Vagina (tissue), 2 donors: ENCODE measurements at regions of chr11 and their contacts with region 1.

Region 1: DNA sequence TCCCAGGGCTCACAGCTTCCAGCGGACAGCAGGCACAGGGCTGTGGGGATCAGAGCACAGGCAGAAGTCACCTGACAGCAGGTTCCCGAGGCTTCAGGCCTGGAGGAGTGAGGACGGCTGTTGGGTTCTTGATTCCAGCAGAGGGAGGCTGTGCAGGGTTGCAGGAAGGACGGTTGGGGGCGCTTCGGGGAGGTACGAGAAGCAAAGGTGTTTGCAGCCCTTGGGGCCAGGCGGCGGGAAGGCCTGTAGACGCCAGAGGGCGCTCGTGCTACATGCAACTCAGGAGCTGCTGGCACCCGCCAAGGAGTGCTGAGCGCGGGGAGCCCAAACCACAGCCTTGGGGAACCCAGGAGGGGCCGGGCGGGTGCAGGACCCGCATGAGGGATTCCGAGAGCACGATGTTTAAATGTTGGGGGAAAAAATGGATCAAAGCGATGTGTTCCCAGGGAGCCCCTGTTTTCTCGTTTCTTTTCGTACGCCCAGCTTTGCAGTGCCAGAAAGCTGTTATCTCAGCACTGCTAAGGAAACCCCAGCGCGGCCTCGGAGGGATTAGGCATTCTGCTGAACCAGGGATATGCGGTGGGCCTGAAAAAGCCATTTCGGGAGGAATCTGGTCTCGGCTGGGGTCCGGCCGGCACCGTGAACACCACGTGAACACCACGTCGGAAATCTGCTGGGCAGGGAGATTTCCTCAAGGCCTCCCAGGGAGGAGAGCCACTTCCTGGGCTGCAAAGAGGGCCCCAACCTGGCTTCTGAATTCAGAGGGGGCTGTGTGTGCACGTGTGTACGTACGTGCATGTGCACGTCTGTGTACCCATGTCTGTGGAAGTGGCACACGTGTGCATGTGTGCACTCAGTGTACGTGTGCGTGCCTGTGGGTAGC is 88.1 kb downstream of the KCNQ1 start:
- DNase-seq: no peak
- H3K4me3 ChIP-seq: peak overlapping the region in 1 of 2 donors; percentile 23
- H3K27ac ChIP-seq: peak overlapping the region; percentile 65
- H3K4me1 ChIP-seq: peaks cover 16% of the 10 kb centered on the region
- H3K27me3 ChIP-seq: no peaks in the 10 kb centered on the region
- CTCF ChIP-seq: peak; percentile 99 to 100 (median 100)
- POLR2A ChIP-seq: no peak

Region 2: DNA sequence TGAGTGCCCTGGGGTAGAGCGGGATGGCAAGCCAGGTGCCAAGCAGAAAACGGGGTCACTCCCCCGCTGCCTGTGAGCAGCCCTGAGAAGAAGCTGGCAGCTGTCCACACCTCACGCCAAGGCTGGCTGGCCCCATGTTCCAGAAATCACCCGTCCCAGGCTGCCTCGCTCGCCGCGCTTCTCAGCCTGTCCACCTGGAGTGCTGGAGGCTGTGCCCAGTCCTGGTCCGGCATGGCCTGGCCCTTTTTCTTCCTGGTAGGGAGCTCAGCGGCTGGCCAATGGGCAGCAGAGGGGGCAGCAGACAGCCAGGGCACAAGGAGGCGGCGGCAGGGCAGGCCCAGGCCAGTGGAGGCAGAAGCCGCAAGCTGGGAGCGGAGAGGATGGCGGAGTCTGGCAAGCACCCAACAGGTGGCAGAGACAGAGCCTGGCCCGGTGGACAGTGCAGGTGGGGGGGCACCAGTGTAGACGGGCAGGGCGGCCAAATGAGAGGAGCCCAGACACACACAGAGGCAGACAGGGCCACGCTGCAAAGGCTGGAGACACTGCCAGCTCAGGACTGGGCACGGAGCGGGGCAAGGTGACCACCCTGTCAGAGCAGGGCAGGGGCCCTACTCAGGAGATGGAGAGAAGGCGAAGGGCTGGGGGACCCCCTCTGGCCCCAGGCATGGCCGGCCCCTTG is 324.1 kb before region 1 on chr11:
- intact Hi-C with region 1: loop called (anchors 10 kb)
- DNase-seq: peak; percentile 79 to 94
- H3K4me3 ChIP-seq: no peak overlapping the region
- H3K27ac ChIP-seq: no peak overlapping the region
- H3K4me1 ChIP-seq: no peaks in the 10 kb centered on the region
- H3K27me3 ChIP-seq: no peaks in the 10 kb centered on the region
- CTCF ChIP-seq: no peak
- POLR2A ChIP-seq: no peak

Region 3: GRCh38 chr11:2892215-2893020 is 359.5 kb after region 1 on chr11:
- intact Hi-C with region 1: loop called (anchors 2 kb)
- DNase-seq: no peak
- H3K4me3 ChIP-seq: peak overlapping the region; percentile 43 to 48
- H3K27ac ChIP-seq: peak overlapping the region; percentile 82
- H3K4me1 ChIP-seq: peaks cover 30% of the 10 kb centered on the region
- H3K27me3 ChIP-seq: no peaks in the 10 kb centered on the region
- CTCF ChIP-seq: peak; percentile 83 to 99 (median 96)
- POLR2A ChIP-seq: no peak